GM13977 (cell line): ENCODE measurements at regions of chr3 and their contacts with region 1.

Region 1: GRCh38 chr3:191376516-191377141 is 46.3 kb upstream of the UTS2B start:
- DNase-seq: no peak
- CTCF ChIP-seq: no peak

Region 2: DNA sequence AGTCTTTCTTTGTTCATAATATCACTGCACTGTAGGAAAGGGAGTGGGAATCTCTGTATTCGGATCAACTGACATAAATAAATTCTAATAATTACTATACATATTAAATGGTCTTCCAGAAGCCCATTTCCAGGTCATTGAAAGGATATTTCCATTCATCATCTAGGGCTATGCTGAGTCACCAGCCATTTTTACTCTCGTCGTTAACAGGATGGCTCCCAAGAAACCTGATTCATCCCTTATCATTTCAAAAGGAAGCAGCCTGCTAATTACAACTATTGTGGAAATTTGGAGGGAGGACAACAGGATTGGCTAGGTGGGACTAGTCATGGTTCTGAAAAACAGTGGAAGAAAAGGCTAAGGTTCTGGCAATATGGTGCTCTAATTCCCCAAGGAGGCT is 527.8 kb before region 1 on chr3:
- in situ Hi-C with region 1: no loop called
- DNase-seq: no peak
- CTCF ChIP-seq: no peak

Region 3: GRCh38 chr3:191136347-191136746 is 240.3 kb before region 1 on chr3:
- in situ Hi-C with region 1: loop called (anchors 25 kb)
- DNase-seq: no peak
- CTCF ChIP-seq: peak; percentile 35